Aorta (tissue), 5 donors: ENCODE measurements at regions of chr9 and their contacts with region 1.

Region 1: DNA sequence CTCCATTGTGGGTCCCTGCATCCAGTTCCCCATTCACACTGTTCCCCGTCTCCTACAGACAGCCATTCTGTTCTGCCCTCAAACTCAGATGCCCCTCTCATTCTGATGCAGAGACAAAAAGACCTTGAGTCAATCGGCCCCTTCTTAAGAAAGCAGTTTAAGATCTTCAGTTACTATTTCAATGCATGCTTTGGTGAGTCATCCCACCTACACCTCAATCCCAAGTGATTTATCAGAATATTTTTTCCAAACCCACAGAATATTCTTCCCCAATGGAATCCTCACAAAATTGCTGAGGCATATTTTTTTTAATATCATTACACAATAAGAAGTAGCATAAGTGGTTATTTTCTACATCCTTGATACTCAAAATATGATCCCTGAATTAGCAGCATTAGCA is 92.4 kb upstream of the SLC1A1 start:
- DNase-seq: no peak
- ATAC-seq: no peak
- H3K4me3 ChIP-seq: no peak overlapping the region
- H3K27ac ChIP-seq: no peak overlapping the region
- H3K4me1 ChIP-seq: no peaks in the 10 kb centered on the region
- H3K27me3 ChIP-seq: no peaks in the 10 kb centered on the region

Region 2: GRCh38 chr9:4530375-4530774 is 132.5 kb after region 1 on chr9:
- intact Hi-C with region 1: loop called in 1 of 2 experiments (anchors 5 kb)
- DNase-seq: no peak
- ATAC-seq: no peak
- H3K4me3 ChIP-seq: no peak overlapping the region
- H3K27ac ChIP-seq: no peak overlapping the region
- H3K4me1 ChIP-seq: no peaks in the 10 kb centered on the region
- H3K27me3 ChIP-seq: no peaks in the 10 kb centered on the region

Region 3: DNA sequence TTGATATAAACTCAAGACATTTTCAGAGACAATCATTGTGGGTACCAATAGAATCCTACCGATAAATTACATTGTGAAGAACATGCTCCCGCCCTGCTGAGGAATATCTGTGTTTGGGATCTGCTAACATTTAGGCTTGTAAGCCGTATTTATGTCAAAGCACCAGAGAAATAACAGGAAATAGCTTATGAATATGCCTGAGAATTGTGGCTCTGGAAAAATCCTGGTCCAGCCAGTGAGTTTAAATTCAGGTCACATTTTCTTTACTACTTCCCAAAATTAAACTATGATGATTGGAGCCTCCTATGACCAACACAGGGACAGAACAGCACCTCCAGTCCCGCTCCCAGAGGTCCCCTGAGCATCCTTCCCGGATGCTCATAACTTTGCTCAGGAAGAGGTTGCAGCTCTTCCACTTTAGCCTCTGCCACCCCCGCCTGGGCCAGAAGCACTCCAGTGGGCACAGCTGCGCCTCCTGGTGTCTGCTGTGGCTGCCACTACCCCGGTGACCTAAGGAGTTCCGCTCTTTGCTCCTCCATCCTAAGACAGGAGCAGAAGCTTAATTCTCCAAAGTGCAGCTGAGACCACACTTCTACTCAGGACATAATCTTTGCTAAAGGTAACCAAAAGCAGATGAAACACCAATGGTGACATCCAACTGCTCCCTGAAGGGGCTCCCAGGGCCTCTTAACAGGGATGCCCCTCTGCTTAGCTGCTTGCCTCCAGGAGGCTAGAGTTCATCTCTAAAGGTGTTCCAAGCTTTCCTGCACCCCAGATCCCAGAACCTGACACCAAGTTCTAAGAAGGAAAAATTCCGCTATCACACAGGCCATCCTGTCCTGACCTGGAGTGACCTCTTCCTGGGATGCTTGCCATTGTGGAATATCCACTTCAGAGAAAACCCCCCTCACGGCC is 151.2 kb after region 1 on chr9:
- intact Hi-C with region 1: no loop called
- DNase-seq: no peak
- ATAC-seq: no peak
- H3K4me3 ChIP-seq: no peak overlapping the region
- H3K27ac ChIP-seq: no peak overlapping the region
- H3K4me1 ChIP-seq: no peaks in the 10 kb centered on the region
- H3K27me3 ChIP-seq: no peaks in the 10 kb centered on the region